Activated CD8-positive, alpha-beta T cell treated with anti-CD3 and anti-CD28 coated beads for 36 hours (primary cell): ENCODE measurements at regions of chr11 and their contacts with region 1.

Region 1: GRCh38 chr11:1694064-1694845 is 2.7 kb upstream of the KRTAP5-6 start:
- DNase-seq: peak; percentile 85
- ATAC-seq: peak; percentile 91
- H3K4me3 Mint-ChIP-seq: no peak overlapping the region
- H3K27ac Mint-ChIP-seq: no peak overlapping the region
- H3K4me1 Mint-ChIP-seq: peaks cover 5% of the 10 kb centered on the region
- H3K27me3 Mint-ChIP-seq: peaks cover 14% of the 10 kb centered on the region
- CTCF ChIP-seq: peak; percentile 76

Region 2: DNA sequence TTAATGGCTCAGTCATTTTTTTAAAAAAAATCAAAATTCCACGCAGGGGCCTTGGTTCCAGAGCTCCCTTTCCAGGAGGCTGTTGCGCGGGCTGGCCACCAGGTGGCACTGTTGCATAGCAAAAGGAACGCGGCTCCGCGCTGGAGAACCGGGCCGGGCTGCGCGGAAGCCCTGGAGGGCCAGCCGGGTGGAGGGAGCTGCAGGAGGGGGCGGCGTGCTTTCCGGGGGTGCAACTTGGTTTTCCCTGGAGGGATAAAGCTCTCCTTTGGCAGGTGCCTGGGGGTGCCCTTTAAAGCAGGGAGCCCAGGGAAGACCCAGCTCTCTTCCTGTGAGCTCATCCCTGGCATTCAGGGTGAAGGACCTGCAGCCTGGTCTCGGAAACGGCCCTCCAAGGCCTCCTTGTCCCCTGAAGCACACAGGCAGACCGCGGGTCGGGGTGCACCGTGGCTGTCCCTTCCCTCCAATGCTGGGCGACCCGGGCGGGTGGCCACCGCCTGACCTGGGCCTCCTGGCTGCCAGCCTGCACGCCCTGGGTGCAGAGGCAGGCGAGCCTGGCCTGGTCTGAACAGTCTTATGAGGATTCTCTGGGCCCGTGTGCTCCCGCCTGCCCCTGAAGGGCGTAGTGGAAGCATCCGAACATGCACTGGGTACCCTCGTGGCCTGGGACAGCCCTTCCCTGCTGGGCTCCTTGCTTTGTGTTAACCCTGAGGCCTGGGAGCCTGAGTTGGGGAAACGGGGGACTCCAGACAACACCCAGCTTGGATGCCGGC is 41.3 kb before region 1 on chr11:
- CTCF ChIA-PET with region 1: interaction called, 56 read pairs
- POLR2A ChIA-PET with region 1: no interaction called
- intact Hi-C with region 1: no loop called
- DNase-seq: peak; percentile 74
- ATAC-seq: peak; percentile 89
- H3K4me3 Mint-ChIP-seq: no peak overlapping the region
- H3K27ac Mint-ChIP-seq: no peak overlapping the region
- H3K4me1 Mint-ChIP-seq: no peaks in the 10 kb centered on the region
- H3K27me3 Mint-ChIP-seq: peaks cover 14% of the 10 kb centered on the region
- CTCF ChIP-seq: peak; percentile 94

Region 3: GRCh38 chr11:1728931-1729691 is 34.9 kb after region 1 on chr11:
- CTCF ChIA-PET with region 1: interaction called, 12 read pairs
- POLR2A ChIA-PET with region 1: no interaction called
- intact Hi-C with region 1: no loop called
- DNase-seq: peak; percentile 65
- ATAC-seq: peak; percentile 72
- H3K4me3 Mint-ChIP-seq: peak overlapping the region; percentile 64
- H3K27ac Mint-ChIP-seq: peak overlapping the region; percentile 85
- H3K4me1 Mint-ChIP-seq: peaks cover 53% of the 10 kb centered on the region
- H3K27me3 Mint-ChIP-seq: peaks cover 8% of the 10 kb centered on the region
- CTCF ChIP-seq: no peak

Region 4: GRCh38 chr11:1792461-1792860 is 98.2 kb after region 1 on chr11:
- CTCF ChIA-PET with region 1: interaction called, 13 read pairs
- POLR2A ChIA-PET with region 1: no interaction called
- intact Hi-C with region 1: no loop called
- DNase-seq: peak; percentile 34
- ATAC-seq: peak; percentile 30
- H3K4me3 Mint-ChIP-seq: peak overlapping the region; percentile 69
- H3K27ac Mint-ChIP-seq: peak overlapping the region; percentile 78
- H3K4me1 Mint-ChIP-seq: peaks cover 8% of the 10 kb centered on the region
- H3K27me3 Mint-ChIP-seq: peaks cover 1% of the 10 kb centered on the region
- CTCF ChIP-seq: no peak

Region 5: DNA sequence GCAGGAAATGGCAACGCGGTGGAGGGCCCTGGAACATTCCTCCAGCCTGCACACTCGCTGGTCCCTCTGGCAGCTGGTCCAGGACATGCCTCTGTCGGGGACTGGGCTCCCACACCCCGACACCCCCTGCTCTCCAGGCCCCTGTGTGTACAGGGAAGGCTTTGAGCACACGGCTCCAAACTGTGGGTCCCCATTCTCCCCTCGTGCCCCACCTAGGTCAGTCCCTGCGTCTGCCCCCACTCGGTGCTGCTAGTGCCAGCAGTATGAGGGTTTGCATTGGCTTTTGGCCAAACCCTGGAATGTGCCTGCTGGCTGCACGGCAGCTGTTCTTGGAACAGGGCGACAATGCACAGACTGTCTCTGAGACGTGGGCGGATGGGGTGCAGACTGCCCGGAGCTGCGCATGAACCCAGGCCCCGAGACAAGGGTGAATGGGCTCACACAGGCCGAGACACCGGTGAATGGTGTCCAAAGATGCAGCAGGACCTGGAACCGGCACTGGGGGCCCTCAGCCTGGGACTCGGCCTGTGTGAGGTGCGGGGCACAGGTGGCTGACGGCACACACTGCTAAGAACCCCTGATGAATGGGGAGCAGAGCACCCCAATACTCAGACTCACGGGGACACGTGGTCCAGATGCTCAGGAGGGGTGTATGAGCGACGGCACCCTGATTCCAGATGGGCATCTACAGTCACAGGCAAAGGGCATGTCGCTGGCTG is 133.0 kb after region 1 on chr11:
- CTCF ChIA-PET with region 1: interaction called, 336 read pairs
- POLR2A ChIA-PET with region 1: interaction called, 7 read pairs
- intact Hi-C with region 1: loop called (anchors 2 kb)
- DNase-seq: no peak
- ATAC-seq: no peak
- H3K4me3 Mint-ChIP-seq: no peak overlapping the region
- H3K27ac Mint-ChIP-seq: no peak overlapping the region
- H3K4me1 Mint-ChIP-seq: no peaks in the 10 kb centered on the region
- H3K27me3 Mint-ChIP-seq: no peaks in the 10 kb centered on the region
- CTCF ChIP-seq: no peak

Region 6: GRCh38 chr11:1845561-1846452 is 151.6 kb after region 1 on chr11:
- CTCF ChIA-PET with region 1: interaction called, 26 read pairs
- POLR2A ChIA-PET with region 1: no interaction called
- intact Hi-C with region 1: no loop called
- DNase-seq: peak; percentile 48
- ATAC-seq: peak; percentile 47
- H3K4me3 Mint-ChIP-seq: peak overlapping the region; percentile 57
- H3K27ac Mint-ChIP-seq: peak overlapping the region; percentile 91
- H3K4me1 Mint-ChIP-seq: peaks cover 60% of the 10 kb centered on the region
- H3K27me3 Mint-ChIP-seq: no peaks in the 10 kb centered on the region
- CTCF ChIP-seq: no peak

Region 7: DNA sequence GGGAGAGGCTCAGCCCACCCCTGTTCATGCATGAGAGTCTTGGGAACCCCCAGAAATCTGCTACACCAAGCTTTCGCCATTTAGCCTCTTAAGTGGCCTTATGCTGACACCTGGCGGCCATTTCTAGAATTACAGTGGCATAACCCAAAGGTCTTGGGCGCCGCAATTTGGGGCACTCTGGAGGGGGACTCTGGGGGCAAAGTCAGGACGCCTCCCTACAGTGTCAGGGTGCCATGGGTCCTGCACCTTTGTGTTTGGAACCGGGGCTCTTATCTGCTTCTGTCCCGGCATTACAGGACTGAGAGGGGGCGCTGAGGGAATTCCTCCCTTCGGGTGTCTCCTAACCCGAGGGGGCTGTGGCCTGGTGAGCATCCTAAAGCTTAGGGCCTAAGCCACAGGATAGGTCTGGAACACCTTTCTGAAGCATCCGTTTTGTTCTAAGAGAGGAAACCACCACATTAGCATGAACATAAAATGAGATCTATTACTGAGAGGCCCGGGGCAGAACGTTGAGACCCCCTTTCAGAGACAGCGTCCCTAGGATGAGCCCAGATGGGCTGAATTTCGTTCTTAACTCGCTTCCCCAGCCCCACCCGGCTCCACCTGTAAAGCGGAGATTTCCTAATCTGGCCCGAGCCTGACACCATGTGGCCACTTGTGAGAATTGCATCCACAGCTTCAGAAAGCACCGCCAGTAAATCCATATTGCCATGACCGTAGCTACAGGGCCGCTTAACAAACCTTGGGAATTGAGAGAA is 457.4 kb after region 1 on chr11:
- CTCF ChIA-PET with region 1: interaction called, 16 read pairs
- POLR2A ChIA-PET with region 1: no interaction called
- intact Hi-C with region 1: no loop called
- DNase-seq: peak; percentile 91
- ATAC-seq: peak; percentile 82
- H3K4me3 Mint-ChIP-seq: no peak overlapping the region
- H3K27ac Mint-ChIP-seq: no peak overlapping the region
- H3K4me1 Mint-ChIP-seq: peaks cover 10% of the 10 kb centered on the region
- H3K27me3 Mint-ChIP-seq: peaks cover 36% of the 10 kb centered on the region
- CTCF ChIP-seq: peak; percentile 86